CD4-positive, alpha-beta memory T cell (primary cell): ENCODE measurements at regions of chr9 and their contacts with region 1.

Region 1: DNA sequence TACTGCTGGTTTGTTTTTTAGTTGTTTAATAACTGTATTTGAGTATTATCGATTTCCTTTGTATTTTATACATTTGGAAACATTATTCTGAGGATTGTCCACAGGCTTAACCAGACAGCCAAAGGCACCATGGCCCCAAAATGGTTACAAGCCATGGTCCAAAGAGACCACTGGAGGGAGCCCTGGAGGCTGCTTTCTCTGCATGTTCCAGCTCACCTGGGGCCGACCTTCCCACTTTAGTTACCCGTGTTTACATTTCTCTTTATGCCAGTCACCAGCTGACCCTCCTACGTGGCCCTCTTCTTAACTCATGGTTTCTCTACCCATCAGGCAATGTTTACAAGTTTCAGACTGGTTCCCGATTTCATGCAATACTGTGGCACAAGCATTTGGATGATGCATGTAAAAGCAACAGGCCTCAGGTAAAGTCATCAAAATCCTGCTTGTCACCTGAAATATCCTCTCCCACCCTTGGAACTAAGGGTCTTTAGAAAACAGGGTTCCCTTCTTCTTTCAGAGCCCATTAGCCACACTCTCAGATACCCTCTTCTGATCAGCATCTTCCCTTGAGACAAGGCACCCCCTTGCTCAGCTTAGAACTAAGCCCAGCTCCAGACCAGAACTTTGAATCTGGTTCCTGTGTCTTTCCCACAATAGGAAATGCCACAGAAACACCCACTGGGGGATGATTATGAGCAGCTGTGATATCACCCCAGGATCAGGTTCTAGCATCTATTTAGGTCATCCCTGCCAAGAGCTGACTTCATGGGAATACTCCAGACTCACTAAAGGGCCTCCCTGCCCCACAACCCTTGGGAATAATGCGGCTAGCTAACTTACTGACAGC is 49.9 kb upstream of the GARNL3 start:
- DNase-seq: peak; percentile 51 to 71 (median 55)
- H3K4me3 ChIP-seq: no peak overlapping the region
- H3K4me3 Mint-ChIP-seq: no peak overlapping the region
- H3K27ac ChIP-seq: no peak overlapping the region
- H3K27ac Mint-ChIP-seq: peak overlapping the region in 1 of 7 donors; percentile 20
- H3K4me1 ChIP-seq: no peaks in the 10 kb centered on the region
- H3K4me1 Mint-ChIP-seq: peaks cover 0 to 6% (median 2%) of the 10 kb centered on the region in 4 donors
- H3K27me3 ChIP-seq: no peaks in the 10 kb centered on the region
- H3K27me3 Mint-ChIP-seq: peaks cover 0 to 1% of the 10 kb centered on the region in 2 donors

Region 2: DNA sequence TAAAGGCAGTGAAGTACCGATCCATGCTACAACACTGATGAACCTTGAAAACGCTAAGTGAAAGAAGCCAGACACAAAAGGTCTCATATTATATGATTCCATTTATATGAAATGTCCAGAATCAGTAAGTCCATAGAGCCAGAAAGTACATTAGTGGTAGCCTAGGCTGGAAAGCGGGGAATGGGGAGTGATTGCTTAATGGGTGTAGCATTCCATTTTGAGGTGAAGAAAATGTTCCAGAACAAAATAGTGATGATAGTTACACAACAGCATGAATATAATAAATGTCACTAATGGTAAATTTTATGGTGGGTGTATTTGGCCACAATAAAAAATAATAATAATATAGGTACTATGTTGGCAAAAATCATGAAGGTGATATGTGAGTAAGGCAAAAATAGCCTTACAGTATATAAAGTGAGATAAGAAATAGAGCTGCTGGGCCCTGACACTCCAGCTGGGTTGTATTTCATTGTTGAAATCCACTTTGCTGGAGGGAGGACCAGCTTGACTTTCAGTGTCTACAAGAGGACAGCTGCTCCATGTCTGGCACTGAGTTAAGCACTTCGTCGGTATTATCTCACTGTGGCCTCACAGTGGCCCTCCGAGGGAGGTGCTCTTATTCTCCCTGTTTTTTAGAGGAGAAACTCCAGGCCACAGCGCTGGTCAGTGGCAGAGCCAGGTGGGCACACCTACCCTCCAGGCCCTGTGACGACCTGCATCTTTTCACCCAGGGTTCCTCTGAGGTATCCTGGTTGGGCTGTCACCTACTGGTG is 69.8 kb before region 1 on chr9:
- CTCF ChIA-PET with region 1: no interaction called
- POLR2A ChIA-PET with region 1: no interaction called
- intact Hi-C with region 1: no loop called
- DNase-seq: no peak
- H3K4me3 ChIP-seq: no peak overlapping the region
- H3K4me3 Mint-ChIP-seq: no peak overlapping the region
- H3K27ac ChIP-seq: no peak overlapping the region
- H3K27ac Mint-ChIP-seq: no peak overlapping the region
- H3K4me1 ChIP-seq: no peaks in the 10 kb centered on the region
- H3K4me1 Mint-ChIP-seq: no peaks in the 10 kb centered on the region
- H3K27me3 ChIP-seq: no peaks in the 10 kb centered on the region
- H3K27me3 Mint-ChIP-seq: peaks cover 0 to 1% of the 10 kb centered on the region in 2 donors

Region 3: GRCh38 chr9:127187231-127187956 is 27.2 kb before region 1 on chr9:
- CTCF ChIA-PET with region 1: no interaction called
- POLR2A ChIA-PET with region 1: no interaction called
- intact Hi-C with region 1: no loop called
- DNase-seq: no peak
- H3K4me3 ChIP-seq: no peak overlapping the region
- H3K4me3 Mint-ChIP-seq: no peak overlapping the region
- H3K27ac ChIP-seq: no peak overlapping the region
- H3K27ac Mint-ChIP-seq: no peak overlapping the region
- H3K4me1 ChIP-seq: no peaks in the 10 kb centered on the region
- H3K4me1 Mint-ChIP-seq: peaks cover 0 to 6% (median 1%) of the 10 kb centered on the region in 4 donors
- H3K27me3 ChIP-seq: no peaks in the 10 kb centered on the region
- H3K27me3 Mint-ChIP-seq: no peaks in the 10 kb centered on the region

Region 4: GRCh38 chr9:127396808-127397497 is 182.3 kb after region 1 on chr9 and contains the start of gene SLC2A8:
- CTCF ChIA-PET with region 1: interaction called, 5 read pairs
- POLR2A ChIA-PET with region 1: interaction called, 3 read pairs
- intact Hi-C with region 1: loop called (anchors 1 kb)
- DNase-seq: peak; percentile 90 to 97 (median 95)
- H3K4me3 ChIP-seq: peak within 1 kb of the TSS; percentile 3 to 45
- H3K4me3 Mint-ChIP-seq: peak within 1 kb of the TSS; percentile 57 to 87 (median 69)
- H3K27ac ChIP-seq: no peak within 1 kb of the TSS
- H3K27ac Mint-ChIP-seq: peak within 1 kb of the TSS in 3 of 7 donors; percentile 13 to 86 (median 65)
- H3K4me1 ChIP-seq: peaks cover 19% of the 10 kb centered on the region
- H3K4me1 Mint-ChIP-seq: peaks cover 5 to 23% (median 13%) of the 10 kb centered on the region in 4 donors
- H3K27me3 ChIP-seq: peaks cover 50% of the 10 kb centered on the region
- H3K27me3 Mint-ChIP-seq: peaks cover 43 to 44% of the 10 kb centered on the region in 2 donors
- total RNA-seq, gene SLC2A8: 2.1 to 2.3 TPM

Region 5: DNA sequence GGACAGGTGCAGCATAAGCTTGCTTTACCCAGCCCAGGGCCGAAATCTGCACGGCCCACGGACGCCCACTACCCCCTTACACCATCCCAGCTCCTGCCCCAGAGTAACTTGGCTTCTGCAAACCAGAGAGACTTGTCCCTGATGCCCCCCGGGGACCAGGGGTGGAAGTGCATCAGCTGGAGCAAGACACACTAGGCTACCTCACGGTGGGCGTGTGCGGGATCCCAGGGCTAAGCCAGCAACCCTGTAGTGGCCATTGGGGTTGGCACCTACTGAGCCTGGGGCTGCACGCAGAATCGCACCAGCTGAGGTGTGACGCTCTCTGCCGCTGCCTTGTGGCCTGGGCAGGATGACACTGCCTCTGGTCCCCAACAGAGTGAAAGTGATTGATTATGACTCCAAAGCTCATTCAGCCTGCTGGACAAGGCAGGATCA is 203.4 kb after region 1 on chr9:
- CTCF ChIA-PET with region 1: interaction called, 4 read pairs
- POLR2A ChIA-PET with region 1: no interaction called
- intact Hi-C with region 1: loop called (anchors 1 kb)
- DNase-seq: peak in 2 of 5 donors; percentile 39
- H3K4me3 ChIP-seq: no peak overlapping the region
- H3K4me3 Mint-ChIP-seq: peak overlapping the region in 2 of 8 donors; percentile 25 to 59
- H3K27ac ChIP-seq: no peak overlapping the region
- H3K27ac Mint-ChIP-seq: no peak overlapping the region
- H3K4me1 ChIP-seq: peaks cover 13% of the 10 kb centered on the region
- H3K4me1 Mint-ChIP-seq: peaks cover 5 to 10% (median 7%) of the 10 kb centered on the region in 4 donors
- H3K27me3 ChIP-seq: no peaks in the 10 kb centered on the region
- H3K27me3 Mint-ChIP-seq: peaks cover 13 to 23% of the 10 kb centered on the region in 2 donors